Ascending aorta (tissue), 2 donors: ENCODE measurements at regions of chr2 and their contacts with region 1.

Region 1: GRCh38 chr2:191691016-191691735 is 13.2 kb downstream of the NABP1 start:
- DNase-seq: peak in 1 of 2 donors; percentile 72
- H3K4me3 ChIP-seq: no peak overlapping the region
- H3K27ac ChIP-seq: no peak overlapping the region
- H3K4me1 ChIP-seq: peaks cover 0 to 33% of the 10 kb centered on the region in 2 donors
- H3K27me3 ChIP-seq: no peaks in the 10 kb centered on the region
- CTCF ChIP-seq: peak; percentile 61 to 72 (median 65)

Region 2: GRCh38 chr2:191565647-191566211 is 125.4 kb before region 1 on chr2:
- intact Hi-C with region 1: loop called (anchors 2 kb)
- DNase-seq: no peak
- H3K4me3 ChIP-seq: no peak overlapping the region
- H3K27ac ChIP-seq: no peak overlapping the region
- H3K4me1 ChIP-seq: no peaks in the 10 kb centered on the region
- H3K27me3 ChIP-seq: no peaks in the 10 kb centered on the region
- CTCF ChIP-seq: no peak

Region 3: GRCh38 chr2:191783416-191783815 is 92.2 kb after region 1 on chr2:
- intact Hi-C with region 1: no loop called
- DNase-seq: no peak
- H3K4me3 ChIP-seq: no peak overlapping the region
- H3K27ac ChIP-seq: no peak overlapping the region
- H3K4me1 ChIP-seq: no peaks in the 10 kb centered on the region
- H3K27me3 ChIP-seq: no peaks in the 10 kb centered on the region
- CTCF ChIP-seq: no peak